ENCODE measurements at regions of chr2 and their contacts with region 1.

Region 1: DNA sequence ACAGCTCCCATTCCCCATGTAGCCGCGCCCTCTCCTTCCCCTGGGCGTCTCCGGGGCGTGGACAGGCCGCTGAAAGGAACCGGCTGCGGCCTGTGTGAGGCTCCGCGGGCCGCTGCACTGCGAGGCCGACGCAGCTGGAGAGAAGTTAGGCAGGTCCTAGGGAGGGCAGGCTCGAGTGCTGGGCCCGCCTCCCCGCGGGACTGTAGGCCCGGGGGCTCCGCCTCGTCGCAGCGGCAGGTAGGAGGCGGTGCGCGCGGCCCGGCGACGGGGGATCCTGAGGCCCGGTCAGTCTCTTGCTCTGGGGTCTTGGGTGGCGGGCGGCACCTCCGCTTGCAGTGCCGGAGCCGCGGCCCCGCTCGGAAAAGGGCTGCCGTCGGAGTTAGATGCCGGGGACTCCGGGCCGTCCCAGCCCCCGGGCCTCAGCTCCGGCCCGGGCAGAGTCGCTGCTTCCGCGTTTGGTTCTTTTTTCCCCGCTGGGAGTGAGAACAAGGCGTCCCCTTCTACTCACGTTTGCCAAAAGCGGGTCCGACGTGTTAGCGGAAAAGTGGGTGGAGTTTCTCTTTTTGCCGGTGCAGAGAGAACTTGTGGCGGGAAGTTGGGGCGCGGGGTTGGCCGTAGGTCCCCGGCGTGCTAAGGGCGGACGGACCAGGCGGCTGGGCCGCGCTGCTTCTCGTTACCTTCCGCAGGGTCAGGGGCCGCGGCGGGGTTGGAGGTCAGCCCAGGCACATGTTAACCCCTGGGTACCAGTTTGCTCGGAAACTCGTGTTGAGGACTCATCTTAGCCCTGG is at the start of gene VRK2:
- DNase-seq: peak; percentile 86 to 94 (median 94)
- ATAC-seq: peak; percentile 98 to 99 (median 98)
- H3K4me3 ChIP-seq: peak within 1 kb of the TSS; percentile 43 to 94 (median 82)
- H3K27ac ChIP-seq: peak within 1 kb of the TSS; percentile 91 to 98 (median 96)
- H3K4me1 ChIP-seq: peaks cover 0 to 35% (median 16%) of the 10 kb centered on the region in 12 donors
- H3K27me3 ChIP-seq: no peaks in the 10 kb centered on the region
- CTCF ChIP-seq: peak in 5 of 12 donors; percentile 20 to 49 (median 42)
- POLR2A ChIP-seq: peak in 1 of 2 donors; percentile 76
- total RNA-seq, gene VRK2: 19.6 to 35.0 (median 27.5) TPM

Region 2: DNA sequence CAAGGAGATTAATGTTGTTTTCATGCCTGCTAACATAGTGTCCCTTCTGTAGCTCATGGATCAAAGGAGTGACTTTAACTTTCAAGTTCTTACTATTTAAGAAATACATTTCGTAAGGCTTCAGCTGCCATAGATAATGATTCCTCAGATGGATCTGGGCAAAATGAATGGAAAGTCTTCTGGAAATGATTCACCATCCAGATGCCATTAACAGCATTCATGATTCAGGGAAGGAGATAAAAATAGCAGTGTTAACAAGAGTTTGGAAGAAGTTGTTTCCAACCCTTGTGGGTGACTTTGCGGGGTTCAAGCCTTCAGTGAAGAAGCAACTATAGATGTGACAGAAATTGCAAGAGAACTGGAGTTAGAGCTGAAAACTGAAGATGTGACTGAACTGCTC is 16.9 kb after region 1 on chr2:
- intact Hi-C with region 1: no loop called
- DNase-seq: no peak
- ATAC-seq: peak in 1 of 4 donors; percentile 54
- H3K4me3 ChIP-seq: no peak overlapping the region
- H3K27ac ChIP-seq: no peak overlapping the region
- H3K4me1 ChIP-seq: peaks cover 0 to 13% (median 2%) of the 10 kb centered on the region in 12 donors
- H3K27me3 ChIP-seq: no peaks in the 10 kb centered on the region
- CTCF ChIP-seq: no peak
- POLR2A ChIP-seq: no peak

Region 3: DNA sequence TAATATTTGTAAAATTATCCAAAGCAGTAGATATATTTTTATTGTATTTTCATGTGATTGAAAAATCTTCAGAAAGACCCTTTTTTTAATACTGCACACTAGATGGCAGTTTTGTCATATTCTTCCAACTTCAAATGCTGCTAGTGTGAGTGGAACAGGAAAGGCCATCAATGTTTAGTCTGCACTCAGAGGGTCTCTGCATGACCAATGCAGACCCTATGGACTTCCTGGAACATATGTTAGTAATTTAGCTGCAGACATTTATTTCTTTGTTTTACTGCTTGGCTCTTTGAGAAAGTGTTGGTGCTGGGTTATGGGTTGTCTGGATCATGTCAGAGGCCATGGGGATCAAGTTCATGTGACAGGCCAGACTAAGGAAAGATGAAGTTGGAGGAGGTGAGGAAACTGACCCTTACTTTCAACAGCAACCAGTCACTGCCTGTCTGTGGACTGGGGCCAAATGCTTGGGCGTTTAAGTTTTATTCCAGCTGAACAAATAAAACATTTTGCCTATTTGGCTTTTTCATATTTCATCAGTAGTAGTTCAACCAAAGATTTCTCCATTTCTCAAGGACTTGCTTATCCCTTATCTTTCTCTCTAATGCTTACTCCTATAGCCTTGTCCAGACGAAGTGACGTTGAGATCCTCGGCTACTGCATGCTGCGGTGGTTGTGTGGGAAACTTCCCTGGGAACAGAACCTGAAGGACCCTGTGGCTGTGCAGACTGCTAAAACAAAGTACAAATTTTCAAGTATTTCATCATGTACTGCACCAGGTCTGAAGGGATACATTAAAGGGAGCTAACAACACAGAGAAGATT is 84.6 kb after region 1 on chr2:
- intact Hi-C with region 1: loop called in 2 of 10 experiments (anchors 10 kb)
- DNase-seq: peak in 4 of 5 donors; percentile 38 to 59 (median 42)
- ATAC-seq: peak; percentile 26 to 90 (median 45)
- H3K4me3 ChIP-seq: no peak overlapping the region
- H3K27ac ChIP-seq: peak overlapping the region in 2 of 12 donors; percentile 3 to 15
- H3K4me1 ChIP-seq: peaks cover 0 to 13% (median 0%) of the 10 kb centered on the region in 12 donors
- H3K27me3 ChIP-seq: no peaks in the 10 kb centered on the region
- CTCF ChIP-seq: peak in 6 of 12 donors; percentile 11 to 43 (median 34)
- POLR2A ChIP-seq: no peak

Region 4: DNA sequence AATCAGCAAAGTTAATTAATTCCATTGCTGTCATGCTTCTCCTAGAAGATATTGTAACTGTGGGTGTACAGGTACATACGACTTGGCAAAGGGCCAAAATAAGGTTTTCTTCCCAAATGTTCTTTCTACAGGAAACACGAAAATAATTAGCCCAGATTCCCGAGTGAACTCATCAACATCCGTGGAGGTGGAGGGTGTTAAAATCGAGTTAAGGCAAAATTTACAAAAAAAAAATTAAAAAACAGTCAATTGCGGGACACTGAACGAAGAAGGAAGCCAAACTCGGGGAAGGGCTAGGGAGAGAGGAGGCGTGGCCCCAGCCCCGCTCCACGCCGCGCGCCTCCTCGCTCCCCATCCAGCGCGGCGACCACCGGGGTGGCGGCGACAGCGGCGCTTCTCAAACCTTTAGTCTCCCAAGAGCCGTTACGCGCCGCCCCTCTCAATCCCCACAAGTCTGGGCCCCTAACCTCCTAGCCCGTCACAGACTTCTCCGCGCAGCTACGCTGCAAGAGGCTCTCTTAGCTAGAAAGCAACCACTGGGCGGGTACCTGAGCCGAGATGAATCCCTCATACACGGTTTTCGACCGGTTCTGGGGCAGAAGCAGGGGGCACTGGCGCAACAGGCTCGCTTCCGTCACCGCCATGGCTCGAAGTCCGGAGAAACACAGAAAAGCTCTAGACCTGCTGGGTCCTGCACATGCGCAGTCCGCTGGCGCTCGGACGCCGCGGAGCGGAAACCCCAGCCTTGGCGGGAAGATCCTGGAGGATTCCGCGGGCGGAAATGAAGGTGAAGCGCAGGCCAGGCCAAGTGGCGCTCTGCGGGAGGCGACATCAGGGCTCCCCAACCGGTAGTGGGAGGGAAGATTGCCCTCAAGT is 194.1 kb after region 1 on chr2 and contains the start of gene FANCL:
- intact Hi-C with region 1: loop called in 3 of 10 experiments (anchors 5 to 10 kb)
- DNase-seq: peak; percentile 89 to 95 (median 93)
- ATAC-seq: peak; percentile 95 to 99 (median 98)
- H3K4me3 ChIP-seq: peak within 1 kb of the TSS; percentile 66 to 96 (median 88)
- H3K27ac ChIP-seq: peak within 1 kb of the TSS; percentile 59 to 86 (median 81)
- H3K4me1 ChIP-seq: peaks cover 0 to 22% (median 9%) of the 10 kb centered on the region in 12 donors
- H3K27me3 ChIP-seq: no peaks in the 10 kb centered on the region
- CTCF ChIP-seq: peak in 1 of 12 donors; percentile 6
- POLR2A ChIP-seq: peak in 1 of 2 donors; percentile 59
- total RNA-seq, gene FANCL: 6.3 to 17.5 (median 10.1) TPM

Measured in heart left ventricle (tissue), 16 donors.